B cell (primary cell): ENCODE measurements at regions of chr19 and their contacts with region 1.

Region 1: GRCh38 chr19:52369559-52370340 is at the start of gene ZNF880:
- DNase-seq: peak; percentile 92
- ATAC-seq: peak; percentile 99
- H3K4me3 ChIP-seq: peak within 1 kb of the TSS; percentile 65 to 91 (median 79)
- H3K4me3 Mint-ChIP-seq: peak within 1 kb of the TSS; percentile 96
- H3K27ac ChIP-seq: peak within 1 kb of the TSS; percentile 97 to 99
- H3K27ac Mint-ChIP-seq: peak within 1 kb of the TSS; percentile 97
- H3K4me1 ChIP-seq: peaks cover 6 to 11% of the 10 kb centered on the region in 2 donors
- H3K4me1 Mint-ChIP-seq: peaks cover 17% of the 10 kb centered on the region
- H3K27me3 ChIP-seq: no peaks in the 10 kb centered on the region
- H3K27me3 Mint-ChIP-seq: no peaks in the 10 kb centered on the region
- CTCF ChIP-seq: no peak
- total RNA-seq, gene ZNF880: 29.2 and 34.1 TPM in 2 replicates

Region 2: GRCh38 chr19:52336117-52336790 is 33.5 kb before region 1 on chr19 and contains the start of gene ZNF610:
- CTCF ChIA-PET with region 1: no interaction called
- POLR2A ChIA-PET with region 1: no interaction called
- intact Hi-C with region 1: loop called (anchors 1 kb)
- DNase-seq: peak; percentile 89
- ATAC-seq: peak; percentile 98
- H3K4me3 ChIP-seq: peak within 1 kb of the TSS; percentile 82 to 97 (median 94)
- H3K4me3 Mint-ChIP-seq: peak within 1 kb of the TSS; percentile 97
- H3K27ac ChIP-seq: peak within 1 kb of the TSS; percentile 79 to 86
- H3K27ac Mint-ChIP-seq: peak within 1 kb of the TSS; percentile 96
- H3K4me1 ChIP-seq: peaks cover 6 to 15% of the 10 kb centered on the region in 2 donors
- H3K4me1 Mint-ChIP-seq: peaks cover 15% of the 10 kb centered on the region
- H3K27me3 ChIP-seq: no peaks in the 10 kb centered on the region
- H3K27me3 Mint-ChIP-seq: no peaks in the 10 kb centered on the region
- CTCF ChIP-seq: no peak
- total RNA-seq, gene ZNF610: 3.7 and 3.8 TPM in 2 replicates

Region 3: GRCh38 chr19:52397310-52398080 is 27.7 kb after region 1 on chr19 and contains the start of gene ZNF528:
- CTCF ChIA-PET with region 1: interaction called, 5 read pairs
- POLR2A ChIA-PET with region 1: interaction called, 4 read pairs
- intact Hi-C with region 1: loop called (anchors 1 kb)
- DNase-seq: peak; percentile 92
- ATAC-seq: peak; percentile 98
- H3K4me3 ChIP-seq: peak within 1 kb of the TSS; percentile 61 to 89 (median 72)
- H3K4me3 Mint-ChIP-seq: peak within 1 kb of the TSS; percentile 90
- H3K27ac ChIP-seq: peak within 1 kb of the TSS; percentile 60 to 77
- H3K27ac Mint-ChIP-seq: peak within 1 kb of the TSS; percentile 94
- H3K4me1 ChIP-seq: peaks cover 15 to 17% of the 10 kb centered on the region in 2 donors
- H3K4me1 Mint-ChIP-seq: peaks cover 20% of the 10 kb centered on the region
- H3K27me3 ChIP-seq: no peaks in the 10 kb centered on the region
- H3K27me3 Mint-ChIP-seq: no peaks in the 10 kb centered on the region
- CTCF ChIP-seq: no peak
- total RNA-seq, gene ZNF528: 69.2 and 71.8 TPM in 2 replicates